Activated naive CD4-positive, alpha-beta T cell treated with anti-CD3 and anti-CD28 coated beads for 36 hours (primary cell): ENCODE measurements at regions of chr11 and their contacts with region 1.

Region 1: GRCh38 chr11:113994077-113994954 is 19.4 kb downstream of the HTR3A start:
- DNase-seq: peak; percentile 42
- H3K4me3 Mint-ChIP-seq: no peak overlapping the region
- H3K27ac Mint-ChIP-seq: no peak overlapping the region
- H3K4me1 Mint-ChIP-seq: no peaks in the 10 kb centered on the region
- H3K27me3 Mint-ChIP-seq: peaks cover 21% of the 10 kb centered on the region

Region 2: GRCh38 chr11:113896156-113896879 is 98.0 kb before region 1 on chr11:
- CTCF ChIA-PET with region 1: interaction called, 4 read pairs
- intact Hi-C with region 1: loop called (anchors 1 kb)
- DNase-seq: peak; percentile 54
- H3K4me3 Mint-ChIP-seq: no peak overlapping the region
- H3K27ac Mint-ChIP-seq: no peak overlapping the region
- H3K4me1 Mint-ChIP-seq: no peaks in the 10 kb centered on the region
- H3K27me3 Mint-ChIP-seq: no peaks in the 10 kb centered on the region

Region 3: GRCh38 chr11:114015119-114015518 is 20.8 kb after region 1 on chr11:
- CTCF ChIA-PET with region 1: no interaction called
- intact Hi-C with region 1: no loop called
- DNase-seq: no peak
- H3K4me3 Mint-ChIP-seq: no peak overlapping the region
- H3K27ac Mint-ChIP-seq: no peak overlapping the region
- H3K4me1 Mint-ChIP-seq: no peaks in the 10 kb centered on the region
- H3K27me3 Mint-ChIP-seq: no peaks in the 10 kb centered on the region

Region 4: DNA sequence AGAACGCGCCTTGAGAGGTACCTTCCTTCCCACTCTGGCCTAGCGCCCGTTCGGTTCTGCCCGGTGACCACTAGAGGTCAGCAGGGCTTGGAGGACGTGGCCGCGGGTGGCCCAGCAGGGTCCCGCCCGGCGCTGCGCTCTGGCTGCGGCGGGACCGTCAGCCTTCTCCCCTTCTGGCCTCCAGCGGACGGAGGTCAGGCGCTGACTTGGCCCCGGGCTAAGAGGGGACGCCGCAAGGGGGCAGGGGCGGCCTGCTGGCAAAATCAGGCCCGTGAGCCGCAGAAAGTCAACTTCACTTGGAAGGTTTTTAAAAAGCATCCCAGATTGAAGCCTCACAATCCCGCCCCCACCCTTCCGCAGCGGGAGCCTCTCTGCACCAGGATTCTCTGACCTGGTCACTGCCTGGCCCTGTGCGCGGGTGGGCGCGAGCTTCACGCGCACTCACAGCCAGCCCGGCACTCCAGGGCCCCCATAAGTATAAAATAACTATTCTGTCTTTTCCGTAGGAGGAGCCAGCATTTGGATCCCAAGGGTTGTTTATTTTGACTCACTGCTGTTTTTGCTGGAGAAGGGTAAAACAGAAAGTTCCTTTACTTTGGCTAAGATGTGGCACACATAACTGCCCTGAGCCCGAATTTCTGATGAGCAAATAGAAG is 42.0 kb after region 1 on chr11:
- CTCF ChIA-PET with region 1: interaction called, 3 read pairs
- intact Hi-C with region 1: loop called (anchors 2 kb)
- DNase-seq: peak; percentile 67
- H3K4me3 Mint-ChIP-seq: no peak overlapping the region
- H3K27ac Mint-ChIP-seq: no peak overlapping the region
- H3K4me1 Mint-ChIP-seq: peaks cover 2% of the 10 kb centered on the region
- H3K27me3 Mint-ChIP-seq: no peaks in the 10 kb centered on the region

Region 5: DNA sequence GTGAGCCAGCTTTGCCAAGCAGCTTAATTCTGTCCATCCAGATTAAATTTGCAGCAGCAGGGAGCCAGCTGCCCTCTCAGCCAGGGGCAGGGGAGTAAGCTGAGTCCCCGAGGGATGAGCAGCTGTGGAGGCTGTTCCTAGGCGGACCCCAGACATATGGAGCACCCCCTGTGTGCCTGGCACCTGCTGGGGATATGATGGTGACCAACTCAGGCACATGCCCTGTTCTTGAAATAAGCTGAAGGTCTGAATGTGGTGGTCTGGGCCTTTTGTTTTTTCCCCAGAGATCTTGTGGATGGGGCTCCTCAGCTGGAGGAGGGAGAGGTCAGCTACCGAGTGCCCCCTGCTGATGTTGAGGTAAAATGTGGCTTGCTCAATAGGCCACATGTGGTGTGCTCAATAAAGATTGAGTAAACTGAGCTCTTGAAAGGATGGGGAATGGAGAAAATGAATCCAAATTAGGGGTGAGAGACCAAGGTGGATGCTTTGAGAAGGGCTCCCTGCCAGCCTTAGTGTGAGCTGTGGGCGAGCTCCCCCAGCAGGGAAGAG is 198.6 kb after region 1 on chr11:
- CTCF ChIA-PET with region 1: interaction called, 15 read pairs
- intact Hi-C with region 1: no loop called
- DNase-seq: no peak
- H3K4me3 Mint-ChIP-seq: no peak overlapping the region
- H3K27ac Mint-ChIP-seq: no peak overlapping the region
- H3K4me1 Mint-ChIP-seq: peaks cover 17% of the 10 kb centered on the region
- H3K27me3 Mint-ChIP-seq: no peaks in the 10 kb centered on the region